Right lobe of liver (tissue), 6 donors: ENCODE measurements at regions of chr2 and their contacts with region 1.

Region 1: DNA sequence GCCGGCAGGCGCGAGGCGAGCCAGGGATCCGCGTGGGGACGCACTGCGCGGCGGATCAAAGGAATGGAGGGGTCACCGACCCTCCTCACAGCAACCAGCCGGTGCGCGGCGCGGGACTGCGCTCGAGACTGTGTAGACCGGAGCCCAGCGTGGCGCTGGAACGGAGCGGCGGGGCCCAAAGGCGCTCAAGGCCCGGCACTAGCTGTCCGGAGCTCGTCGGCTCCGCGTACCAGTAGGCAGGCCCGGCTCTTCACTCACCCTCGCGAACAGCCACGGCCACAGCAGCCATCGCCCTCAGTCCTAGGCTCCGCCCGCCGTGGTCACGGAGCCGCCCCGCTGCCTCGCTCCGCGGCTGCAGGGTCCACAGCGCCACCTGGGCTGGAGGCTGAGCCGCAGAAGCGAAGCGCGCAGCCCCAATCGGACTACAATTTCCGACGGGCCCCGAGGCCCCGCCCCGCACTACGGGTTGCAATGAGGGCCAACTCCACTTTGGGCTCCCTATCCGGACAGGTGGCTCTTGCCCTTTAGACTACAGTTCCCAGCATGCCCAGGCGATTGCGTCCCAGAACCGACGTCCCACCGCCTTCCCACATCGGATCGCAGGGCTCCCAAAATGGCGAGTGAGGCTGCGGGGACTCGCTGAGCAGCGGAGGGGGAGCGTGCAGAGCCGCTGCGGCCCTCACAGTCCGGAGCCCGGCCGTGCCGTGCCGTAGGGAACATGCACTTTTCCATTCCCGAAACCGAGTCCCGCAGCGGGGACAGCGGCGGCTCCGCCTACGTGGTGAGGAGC is at the starts of genes EIF2B4 and SNX17:
- DNase-seq: peak; percentile 98 to 100 (median 99)
- ATAC-seq: peak; percentile 90 to 97 (median 94)
- H3K4me3 ChIP-seq: peak within 1 kb of the TSS; percentile 61 to 100 (median 93)
- H3K27ac ChIP-seq: peak within 1 kb of the TSS; percentile 81 to 85 (median 84)
- H3K4me1 ChIP-seq: peaks cover 0 to 24% (median 7%) of the 10 kb centered on the region in 4 donors
- H3K27me3 ChIP-seq: no peaks in the 10 kb centered on the region
- CTCF ChIP-seq: peak; percentile 67 to 87 (median 85)
- POLR2A ChIP-seq: peak; percentile 78
- total RNA-seq, gene EIF2B4: 17.6 to 25.0 (median 20.9) TPM
- total RNA-seq, gene SNX17: 50.1 to 58.9 (median 54.1) TPM

Region 2: DNA sequence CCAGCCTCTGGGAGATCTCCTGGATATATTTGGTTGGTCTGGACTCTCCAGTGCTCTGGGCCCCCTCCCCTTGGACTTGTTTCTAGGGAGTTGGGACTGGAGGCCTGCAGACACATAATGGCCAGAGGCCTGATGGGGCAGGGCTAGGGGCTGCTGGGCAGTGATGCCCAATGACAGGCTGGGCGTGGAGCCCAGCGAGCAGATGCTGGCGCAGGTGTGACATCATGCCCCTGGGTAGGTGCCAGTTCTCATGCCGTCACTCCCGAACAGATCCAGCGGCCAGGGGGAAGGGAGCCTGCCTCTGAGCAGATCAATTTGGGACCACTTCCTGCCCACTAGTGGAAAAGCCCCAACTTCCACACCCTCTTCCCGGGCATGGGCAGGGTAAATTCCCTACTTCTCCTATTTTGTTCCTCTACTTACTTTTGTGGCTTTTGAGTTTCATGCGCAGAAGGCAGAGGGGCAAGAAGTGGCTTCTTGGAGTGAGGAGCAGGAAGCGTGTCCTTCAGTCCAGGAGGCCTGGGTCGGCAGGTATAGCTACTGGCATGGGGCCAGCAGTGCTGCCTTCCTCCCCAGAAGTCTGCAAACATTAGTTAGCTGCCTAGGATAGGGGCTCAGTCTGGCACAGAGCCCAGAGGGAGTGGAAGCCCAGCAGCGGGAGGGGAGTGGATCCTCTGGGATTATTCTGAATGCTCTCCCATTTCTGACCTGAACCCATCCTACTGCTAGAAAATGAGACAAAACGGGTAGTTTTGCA is 53.4 kb before region 1 on chr2:
- intact Hi-C with region 1: loop called in 1 of 2 experiments (anchors 10 kb)
- DNase-seq: no peak
- ATAC-seq: no peak
- H3K4me3 ChIP-seq: no peak overlapping the region
- H3K27ac ChIP-seq: no peak overlapping the region
- H3K4me1 ChIP-seq: peaks cover 0 to 14% (median 6%) of the 10 kb centered on the region in 4 donors
- H3K27me3 ChIP-seq: no peaks in the 10 kb centered on the region
- CTCF ChIP-seq: no peak
- POLR2A ChIP-seq: no peak

Region 3: DNA sequence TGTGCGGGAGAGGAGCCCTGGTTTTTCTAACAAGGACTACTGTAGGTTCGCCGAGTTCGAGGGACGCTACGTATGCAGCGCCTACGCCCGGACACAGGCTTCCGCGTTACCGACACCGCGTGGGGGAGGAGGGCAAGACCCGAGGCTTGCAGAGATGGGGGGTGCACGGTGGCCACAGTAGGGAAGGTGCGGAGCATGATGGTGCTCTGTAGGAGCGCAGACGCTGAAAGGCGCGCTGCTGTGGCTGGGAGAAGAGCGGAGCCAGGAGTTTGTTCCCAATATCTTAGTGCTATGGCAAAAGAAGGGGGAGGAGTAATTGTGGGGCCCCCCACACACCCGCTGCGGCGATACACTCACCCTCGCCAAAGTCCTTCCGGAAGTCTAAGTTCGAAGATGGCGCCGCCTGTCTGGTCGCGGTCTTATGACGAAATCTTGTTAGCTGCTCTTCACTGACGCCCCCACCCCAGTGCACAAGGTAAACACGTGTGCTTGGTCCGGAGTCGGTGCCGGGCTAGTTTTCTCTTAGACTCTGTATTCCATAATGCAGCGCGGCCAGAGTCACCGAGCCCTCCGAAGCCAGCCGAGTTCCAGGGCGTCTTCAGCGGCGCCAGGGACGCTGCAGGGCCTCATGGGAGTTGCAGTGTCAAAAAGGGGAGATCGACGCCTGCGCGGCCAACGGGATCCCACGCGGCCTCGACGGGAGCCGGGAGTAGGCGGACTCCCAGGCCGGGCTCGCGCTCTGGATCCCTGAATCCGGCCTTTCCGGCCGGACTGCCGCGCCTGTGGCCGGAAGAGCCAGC is 13.6 kb before region 1 on chr2 and contains the start of gene GTF3C2:
- intact Hi-C with region 1: loop called in 1 of 2 experiments (anchors 2 kb)
- DNase-seq: peak; percentile 93 to 95 (median 95)
- ATAC-seq: peak; percentile 92 to 97 (median 94)
- H3K4me3 ChIP-seq: peak within 1 kb of the TSS; percentile 91 to 96 (median 93)
- H3K27ac ChIP-seq: peak within 1 kb of the TSS; percentile 75 to 88 (median 79)
- H3K4me1 ChIP-seq: peaks cover 0 to 36% (median 3%) of the 10 kb centered on the region in 4 donors
- H3K27me3 ChIP-seq: no peaks in the 10 kb centered on the region
- CTCF ChIP-seq: peak in 1 of 4 donors; percentile 9
- POLR2A ChIP-seq: no peak
- total RNA-seq, gene GTF3C2: 13.4 to 20.1 (median 16.8) TPM